Calu3 (cell line): ENCODE measurements at regions of chr3 and their contacts with region 1.

Region 1: DNA sequence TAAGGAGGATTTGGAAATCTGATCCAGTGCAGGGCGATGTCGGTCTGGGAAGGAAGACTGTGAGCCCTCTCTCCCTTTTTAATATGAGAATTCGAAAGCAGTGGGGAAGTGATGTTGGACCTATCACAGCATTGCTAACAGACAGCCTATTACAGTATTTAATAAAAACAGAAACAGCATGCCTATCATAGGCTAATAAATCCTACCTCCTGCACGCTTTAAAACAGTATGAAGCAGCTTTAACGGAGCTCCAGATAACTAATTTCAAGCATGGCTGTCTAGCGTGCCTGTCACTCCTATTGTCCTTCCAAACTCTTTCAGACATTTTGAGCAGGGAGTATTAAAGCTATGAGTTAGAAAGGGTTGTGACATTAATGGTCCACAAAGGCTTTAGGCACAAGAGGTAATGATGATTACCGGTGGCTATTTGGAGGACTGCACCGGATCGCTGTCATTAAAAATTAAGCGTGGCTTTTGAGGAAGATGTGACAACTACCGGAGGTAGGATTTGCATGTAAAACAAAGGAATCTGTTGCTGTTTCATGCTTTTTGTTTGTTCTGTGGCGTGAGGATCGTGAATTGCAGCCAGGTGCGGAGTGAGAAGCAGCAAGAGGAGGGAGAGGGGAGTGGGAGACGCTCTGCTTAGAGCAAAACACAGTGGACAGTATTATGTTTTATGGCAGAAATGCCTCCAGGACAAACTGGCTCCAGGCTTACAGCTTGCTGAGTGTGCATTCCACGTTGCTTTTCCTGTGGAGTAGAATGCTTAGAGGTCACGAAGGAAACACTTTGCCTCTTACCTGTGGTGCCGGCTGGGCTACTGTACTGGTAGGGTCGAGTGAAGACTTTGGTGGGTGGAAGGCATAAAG is at the start of gene KCNMB2:
- DNase-seq: no peak
- H3K4me3 Mint-ChIP-seq: peak within 1 kb of the TSS; percentile 56
- H3K27ac Mint-ChIP-seq: no peak within 1 kb of the TSS
- H3K4me1 Mint-ChIP-seq: no peaks in the 10 kb centered on the region
- H3K27me3 Mint-ChIP-seq: no peaks in the 10 kb centered on the region
- CTCF ChIP-seq: no peak
- total RNA-seq, gene KCNMB2: not detected in 2 replicates

Region 2: DNA sequence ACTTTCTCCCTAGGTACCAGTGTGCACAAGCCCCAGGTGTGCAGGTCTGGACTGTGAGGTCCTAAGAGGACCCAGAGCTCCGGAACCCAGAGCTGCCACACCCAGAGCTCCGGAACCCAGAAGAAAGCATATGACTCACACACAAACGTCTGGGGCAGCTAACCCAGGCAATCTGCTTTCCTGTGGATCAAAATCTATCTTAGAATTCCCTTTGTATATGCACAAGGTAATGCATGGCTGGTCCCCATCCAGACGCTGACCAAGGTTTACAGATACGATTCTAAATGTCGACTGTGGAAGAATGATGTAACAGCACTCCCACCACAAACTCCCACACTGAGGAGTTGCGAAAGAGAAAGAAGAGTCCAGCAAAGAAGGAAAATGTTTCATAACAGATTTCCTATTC is 15.5 kb after region 1 on chr3:
- CTCF ChIA-PET with region 1: no interaction called
- intact Hi-C with region 1: loop called (anchors 2 kb)
- DNase-seq: no peak
- H3K4me3 Mint-ChIP-seq: no peak overlapping the region
- H3K27ac Mint-ChIP-seq: no peak overlapping the region
- H3K4me1 Mint-ChIP-seq: no peaks in the 10 kb centered on the region
- H3K27me3 Mint-ChIP-seq: no peaks in the 10 kb centered on the region
- CTCF ChIP-seq: no peak

Region 3: DNA sequence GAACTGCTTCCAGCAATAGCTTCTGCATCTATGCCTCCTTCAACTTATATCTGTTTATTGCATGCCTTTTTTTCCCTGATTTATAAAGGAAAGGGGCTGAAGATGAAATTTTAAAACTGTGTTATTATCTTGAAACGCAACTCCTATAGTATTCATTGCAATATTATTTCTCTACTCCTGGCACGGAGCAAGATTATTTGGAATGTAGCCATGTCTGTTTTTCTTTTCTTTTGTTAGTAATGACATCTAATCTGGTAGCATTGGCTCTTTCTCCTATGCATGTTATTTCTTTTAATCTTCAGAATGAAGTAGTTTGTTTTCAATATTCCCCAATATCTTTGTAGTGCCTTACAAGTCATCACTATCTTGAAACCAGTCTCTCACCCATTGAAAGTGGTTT is 33.4 kb after region 1 on chr3:
- CTCF ChIA-PET with region 1: no interaction called
- intact Hi-C with region 1: no loop called
- DNase-seq: no peak
- H3K4me3 Mint-ChIP-seq: no peak overlapping the region
- H3K27ac Mint-ChIP-seq: no peak overlapping the region
- H3K4me1 Mint-ChIP-seq: no peaks in the 10 kb centered on the region
- H3K27me3 Mint-ChIP-seq: no peaks in the 10 kb centered on the region
- CTCF ChIP-seq: no peak